ENCODE measurements at regions of chr13 and their contacts with region 1.

Region 1: GRCh38 chr13:26186118-26186870 is 35.8 kb downstream of the RNF6 start:
- DNase-seq: peak; percentile 87
- H3K4me3 Mint-ChIP-seq: peak overlapping the region; percentile 82
- H3K27ac Mint-ChIP-seq: peak overlapping the region; percentile 89
- H3K4me1 Mint-ChIP-seq: peaks cover 18% of the 10 kb centered on the region
- H3K27me3 Mint-ChIP-seq: no peaks in the 10 kb centered on the region

Region 2: DNA sequence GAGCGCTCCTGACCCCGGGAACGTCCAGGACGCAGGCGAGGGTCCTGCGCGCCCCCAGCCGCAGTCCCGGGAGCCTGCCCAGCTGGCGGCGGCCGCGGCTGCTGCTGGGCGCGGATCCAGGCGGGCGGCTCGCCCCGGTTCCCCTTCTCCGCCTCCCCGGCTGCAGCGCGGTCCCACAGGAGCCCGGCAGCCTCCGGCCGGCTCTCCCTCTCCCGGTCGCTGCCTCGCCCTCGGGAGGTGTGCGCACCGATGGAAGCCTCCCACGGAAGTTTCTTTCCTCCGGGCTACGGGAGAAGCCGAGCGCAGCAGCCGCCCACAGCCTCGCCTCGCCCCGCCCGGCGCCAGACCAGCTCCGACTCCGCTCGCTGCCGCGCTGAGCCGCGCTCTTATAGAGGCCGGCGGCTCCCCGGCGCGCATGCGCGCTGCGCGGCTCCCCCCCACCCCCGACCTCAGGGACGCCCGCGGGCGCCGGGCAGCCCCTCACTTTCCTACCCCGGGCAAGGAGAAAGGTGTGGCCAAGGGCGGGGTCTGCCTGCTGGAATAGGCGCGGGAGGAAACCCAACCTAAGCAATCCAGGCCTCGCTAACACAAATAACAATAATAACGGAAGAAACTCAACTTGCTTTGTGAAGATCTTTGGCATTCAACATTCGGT is 134.5 kb before region 1 on chr13 and contains the start of gene SHISA2:
- intact Hi-C with region 1: loop called (anchors 5 kb)
- DNase-seq: no peak
- H3K4me3 Mint-ChIP-seq: peak within 1 kb of the TSS; percentile 52
- H3K27ac Mint-ChIP-seq: no peak within 1 kb of the TSS
- H3K4me1 Mint-ChIP-seq: peaks cover 19% of the 10 kb centered on the region
- H3K27me3 Mint-ChIP-seq: peaks cover 69% of the 10 kb centered on the region
- total RNA-seq, gene SHISA2: 0.07 and 0.14 TPM in 2 replicates

Region 3: DNA sequence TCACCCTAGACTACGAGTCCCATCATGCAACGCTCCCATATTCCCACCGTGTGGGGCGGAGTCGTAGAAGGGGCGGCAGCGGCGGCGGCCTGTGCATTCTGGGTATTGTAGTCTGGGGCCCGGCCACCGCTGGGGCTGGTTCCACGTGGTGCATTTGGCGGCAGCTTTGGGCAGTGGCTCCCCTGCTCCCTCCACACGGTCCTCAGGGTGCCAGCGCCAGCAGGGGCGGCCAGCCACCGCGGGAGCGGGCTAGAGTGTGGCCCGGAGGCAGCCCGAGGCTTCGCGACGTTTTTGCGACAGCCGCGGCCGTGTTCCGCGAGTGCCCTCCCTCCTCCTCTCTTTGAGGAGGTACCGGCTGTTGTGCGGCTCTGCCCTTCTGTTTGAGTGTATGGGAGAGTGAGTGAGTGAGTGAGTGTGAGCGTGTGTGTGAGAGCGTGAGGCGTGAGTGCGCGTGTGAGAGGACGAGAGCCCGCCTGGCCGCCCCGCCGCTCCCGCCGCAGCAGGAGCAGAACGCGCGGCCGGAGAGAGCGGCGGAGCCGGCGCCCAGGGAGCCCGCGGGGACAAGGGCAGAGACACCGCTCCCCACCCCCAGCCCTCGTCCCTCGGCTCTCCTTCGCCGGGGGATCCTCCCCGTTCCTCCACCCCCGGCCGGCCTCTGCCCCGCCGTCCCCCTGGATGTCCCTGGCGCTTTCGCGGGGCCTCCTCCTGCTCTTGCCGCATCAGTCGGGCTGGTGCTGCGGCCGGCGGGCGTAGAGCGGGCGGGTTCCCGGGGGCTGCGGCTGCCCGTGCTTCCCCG is 67.7 kb after region 1 on chr13 and contains the start of gene CDK8:
- intact Hi-C with region 1: loop called (anchors 1 kb)
- DNase-seq: peak; percentile 85
- H3K4me3 Mint-ChIP-seq: peak within 1 kb of the TSS; percentile 92
- H3K27ac Mint-ChIP-seq: peak within 1 kb of the TSS; percentile 90
- H3K4me1 Mint-ChIP-seq: peaks cover 30% of the 10 kb centered on the region
- H3K27me3 Mint-ChIP-seq: no peaks in the 10 kb centered on the region
- total RNA-seq, gene CDK8: 18.3 and 21.2 TPM in 2 replicates

Region 4: GRCh38 chr13:26495750-26496149 is 309.5 kb after region 1 on chr13:
- intact Hi-C with region 1: loop called (anchors 1 kb)
- DNase-seq: no peak
- H3K4me3 Mint-ChIP-seq: no peak overlapping the region
- H3K27ac Mint-ChIP-seq: no peak overlapping the region
- H3K4me1 Mint-ChIP-seq: no peaks in the 10 kb centered on the region
- H3K27me3 Mint-ChIP-seq: peaks cover 5% of the 10 kb centered on the region